ENCODE measurements at regions of chr7 and their contacts with region 1.

Region 1: DNA sequence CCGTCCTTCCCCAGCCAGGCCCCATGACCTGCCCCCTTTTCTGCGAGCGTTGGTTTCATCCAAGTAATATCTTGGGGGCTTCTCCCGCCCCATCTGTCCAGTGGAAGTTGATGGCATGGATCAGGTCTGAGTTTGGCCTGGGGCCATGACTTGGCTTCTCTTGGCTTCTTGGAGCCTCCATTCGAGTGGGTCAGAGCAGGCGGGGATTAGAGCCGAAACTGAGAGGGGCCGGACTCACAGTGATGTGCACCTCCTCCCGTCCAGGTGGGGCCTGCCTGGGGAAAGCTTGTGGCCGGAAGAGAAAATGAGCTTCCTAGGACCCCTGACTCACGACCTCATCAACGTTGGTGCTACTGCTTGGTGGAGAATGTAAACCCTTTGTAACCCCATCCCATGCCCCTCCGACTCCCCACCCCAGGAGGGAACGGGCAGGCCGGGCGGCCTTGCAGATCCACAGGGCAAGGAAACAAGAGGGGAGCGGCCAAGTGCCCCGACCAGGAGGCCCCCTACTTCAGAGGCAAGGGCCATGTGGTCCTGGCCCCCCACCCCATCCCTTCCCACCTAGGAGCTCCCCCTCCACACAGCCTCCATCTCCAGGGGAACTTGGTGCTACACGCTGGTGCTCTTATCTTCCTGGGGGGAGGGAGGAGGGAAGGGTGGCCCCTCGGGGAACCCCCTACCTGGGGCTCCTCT is 15.1 kb upstream of the LIMK1 start:
- DNase-seq: no peak
- ATAC-seq: no peak

Region 2: GRCh38 chr7:74183613-74184450 is 115.3 kb after region 1 on chr7:
- intact Hi-C with region 1: loop called in 1 of 2 experiments (anchors 10 kb)
- DNase-seq: peak in 1 of 2 donors; percentile 39
- ATAC-seq: peak; percentile 49

Region 3: GRCh38 chr7:74401137-74401859 is 332.8 kb after region 1 on chr7:
- intact Hi-C with region 1: loop called (anchors 2 to 10 kb)
- DNase-seq: peak in 1 of 2 donors; percentile 82
- ATAC-seq: peak; percentile 61

Measured in left colon (tissue), 2 donors.